ENCODE measurements at regions of chrX and their contacts with region 1.

Region 1: DNA sequence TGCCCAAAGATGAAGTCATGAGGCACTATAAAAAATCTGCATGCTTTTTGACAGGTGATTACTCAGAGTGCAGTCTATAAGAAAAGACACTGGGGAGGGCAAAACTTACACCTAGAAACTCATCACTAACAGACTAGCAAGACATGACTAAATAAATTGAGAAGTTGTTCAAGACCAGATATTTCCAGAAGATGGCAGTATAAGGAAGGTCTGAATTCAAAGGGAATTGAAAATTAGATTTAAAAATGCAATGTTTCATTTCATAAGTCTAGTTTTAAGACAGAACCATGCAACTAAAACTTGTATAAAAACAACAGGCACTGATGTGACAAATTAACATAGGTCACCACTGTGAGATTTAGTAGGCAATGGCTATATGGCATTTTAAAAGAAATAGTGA is 232.5 kb upstream of the POF1B start:
- H3K4me3 Mint-ChIP-seq: no peak overlapping the region
- H3K27ac Mint-ChIP-seq: no peak overlapping the region
- H3K4me1 Mint-ChIP-seq: no peaks in the 10 kb centered on the region
- H3K27me3 Mint-ChIP-seq: no peaks in the 10 kb centered on the region

Region 2: DNA sequence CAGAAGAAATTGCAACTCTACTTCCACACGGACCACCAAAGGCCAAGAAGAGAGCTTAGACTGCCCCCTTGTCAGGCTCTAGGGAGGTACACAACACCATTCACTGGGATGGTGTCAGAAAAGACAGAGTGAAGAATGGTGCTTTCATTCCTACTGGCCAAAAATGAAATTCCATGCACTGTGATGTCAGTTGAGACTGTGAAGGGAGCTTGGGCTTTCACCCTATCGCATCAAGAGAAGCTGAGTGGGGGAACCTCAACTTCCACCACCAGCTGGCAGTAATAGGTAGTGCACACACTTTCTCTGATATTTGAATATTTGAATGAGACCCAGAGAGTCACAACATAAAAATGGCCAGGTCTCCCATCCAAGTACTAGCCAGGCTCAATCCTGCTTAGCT is 302.2 kb before region 1 on chrX:
- intact Hi-C with region 1: no loop called
- H3K4me3 Mint-ChIP-seq: no peak overlapping the region
- H3K27ac Mint-ChIP-seq: no peak overlapping the region
- H3K4me1 Mint-ChIP-seq: no peaks in the 10 kb centered on the region
- H3K27me3 Mint-ChIP-seq: no peaks in the 10 kb centered on the region

Region 3: GRCh38 chrX:85544609-85545008 is 67.3 kb before region 1 on chrX:
- intact Hi-C with region 1: no loop called
- H3K4me3 Mint-ChIP-seq: no peak overlapping the region
- H3K27ac Mint-ChIP-seq: no peak overlapping the region
- H3K4me1 Mint-ChIP-seq: no peaks in the 10 kb centered on the region
- H3K27me3 Mint-ChIP-seq: no peaks in the 10 kb centered on the region

Region 4: DNA sequence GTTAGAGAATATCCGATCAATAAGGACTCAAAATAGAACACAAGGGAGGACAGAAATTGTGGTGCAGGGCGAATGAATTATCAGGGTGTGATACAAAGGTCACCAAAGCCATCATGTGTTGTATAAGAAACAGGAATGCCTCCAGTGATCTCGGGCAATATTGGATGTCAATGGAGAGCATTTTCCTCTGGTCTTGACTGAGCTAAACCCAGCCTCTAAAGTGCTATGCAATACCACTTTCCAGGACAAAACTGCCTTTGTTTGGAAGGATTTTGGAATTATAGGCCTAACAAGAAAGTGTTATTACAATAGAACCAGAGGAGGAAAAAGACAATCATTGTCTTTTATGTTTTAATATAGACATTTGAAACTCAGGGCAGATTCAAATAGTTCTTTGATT is 153.7 kb after region 1 on chrX:
- intact Hi-C with region 1: no loop called
- H3K4me3 Mint-ChIP-seq: no peak overlapping the region
- H3K27ac Mint-ChIP-seq: no peak overlapping the region
- H3K4me1 Mint-ChIP-seq: no peaks in the 10 kb centered on the region
- H3K27me3 Mint-ChIP-seq: no peaks in the 10 kb centered on the region

Region 5: GRCh38 chrX:87299563-87300160 is 1687.7 kb after region 1 on chrX:
- intact Hi-C with region 1: loop called (anchors 5 kb)
- H3K4me3 Mint-ChIP-seq: no peak overlapping the region
- H3K27ac Mint-ChIP-seq: no peak overlapping the region
- H3K4me1 Mint-ChIP-seq: no peaks in the 10 kb centered on the region
- H3K27me3 Mint-ChIP-seq: no peaks in the 10 kb centered on the region

Measured in dendritic cell treated with granulocyte-macrophage colony-stimulating factor and Interleukin-4, amounts not matched to agents 40 ng/mL and 50 ng/mL, for 4 days (primary cell).